Posterior vena cava (tissue), 2 donors: ENCODE measurements at regions of chr6 and their contacts with region 1.

Region 1: GRCh38 chr6:30664994-30665767 is 7.6 kb downstream of the DHX16 start:
- DNase-seq: no peak

Region 2: GRCh38 chr6:31094389-31094881 is 429.3 kb after region 1 on chr6:
- intact Hi-C with region 1: loop called in 1 of 2 experiments (anchors 10 kb)
- DNase-seq: no peak

Region 3: GRCh38 chr6:31493875-31494694 is 828.9 kb after region 1 on chr6:
- intact Hi-C with region 1: no loop called
- DNase-seq: peak; percentile 93